ENCODE measurements at regions of chr15 and their contacts with region 1.

Region 1: DNA sequence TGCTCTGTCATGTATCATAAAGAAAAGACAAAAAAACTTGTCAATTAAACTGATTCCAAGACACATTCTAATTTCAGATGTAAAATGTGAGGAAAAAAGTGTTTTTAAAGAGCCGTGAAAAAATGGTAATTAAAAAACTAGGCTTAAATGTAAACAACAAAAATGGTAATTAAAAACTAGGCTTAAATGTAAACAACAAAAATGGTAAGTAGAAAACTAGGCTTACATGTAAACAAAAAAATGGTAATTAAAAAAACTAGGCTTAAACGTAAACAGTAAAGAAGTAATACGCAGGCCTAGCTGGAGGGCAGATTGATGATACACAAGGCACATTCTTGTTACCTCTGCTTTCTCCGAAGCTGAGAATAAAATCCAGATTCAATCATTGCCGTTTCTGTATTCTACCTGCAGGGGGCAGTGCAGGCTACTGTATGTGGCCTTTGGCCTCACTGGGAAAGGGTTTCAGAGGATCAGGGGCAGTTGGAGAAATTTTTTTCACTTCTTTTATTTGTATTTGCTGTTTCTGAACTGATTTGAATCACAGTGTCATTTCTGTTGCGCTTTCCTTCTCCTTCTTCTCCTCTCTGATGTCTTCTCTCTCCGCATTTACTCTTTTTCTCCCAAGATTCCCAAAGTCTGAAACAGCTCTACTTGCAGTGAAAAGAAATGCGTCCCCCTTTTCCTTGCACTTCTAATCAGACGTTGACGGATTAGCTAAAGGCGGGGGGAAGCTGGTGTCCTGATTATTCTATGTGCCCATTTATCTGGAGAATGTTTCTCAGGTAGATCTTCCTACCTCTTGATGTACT is 67.2 kb upstream of the MCTP2 start:
- DNase-seq: peak; percentile 75
- ATAC-seq: peak; percentile 49
- H3K4me3 Mint-ChIP-seq: no peak overlapping the region
- H3K27ac Mint-ChIP-seq: no peak overlapping the region
- H3K4me1 Mint-ChIP-seq: no peaks in the 10 kb centered on the region
- H3K27me3 Mint-ChIP-seq: no peaks in the 10 kb centered on the region

Region 2: DNA sequence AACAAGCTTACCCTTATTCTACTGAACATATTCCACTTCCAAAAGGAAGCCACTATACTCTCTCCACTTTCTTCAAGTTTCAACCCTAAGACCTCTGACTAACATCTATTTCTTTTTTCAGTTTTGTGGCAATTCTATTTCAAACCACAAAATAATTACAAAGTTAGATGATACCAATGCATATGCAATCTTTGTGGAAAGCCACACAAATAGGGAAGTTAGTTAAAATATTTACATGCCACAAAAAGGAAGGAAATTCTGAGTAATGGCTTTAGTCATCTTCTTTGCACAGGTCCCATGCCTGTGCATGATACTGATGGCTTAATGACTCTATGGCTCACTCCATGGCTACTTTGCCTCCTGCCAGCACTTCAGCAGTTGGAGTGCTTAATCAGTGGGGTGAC is 10.2 kb after region 1 on chr15:
- CTCF ChIA-PET with region 1: interaction called, 15 read pairs
- POLR2A ChIA-PET with region 1: no interaction called
- intact Hi-C with region 1: no loop called
- DNase-seq: peak; percentile 16
- ATAC-seq: peak; percentile 95
- H3K4me3 Mint-ChIP-seq: no peak overlapping the region
- H3K27ac Mint-ChIP-seq: no peak overlapping the region
- H3K4me1 Mint-ChIP-seq: peaks cover 25% of the 10 kb centered on the region
- H3K27me3 Mint-ChIP-seq: peaks cover 7% of the 10 kb centered on the region

Region 3: DNA sequence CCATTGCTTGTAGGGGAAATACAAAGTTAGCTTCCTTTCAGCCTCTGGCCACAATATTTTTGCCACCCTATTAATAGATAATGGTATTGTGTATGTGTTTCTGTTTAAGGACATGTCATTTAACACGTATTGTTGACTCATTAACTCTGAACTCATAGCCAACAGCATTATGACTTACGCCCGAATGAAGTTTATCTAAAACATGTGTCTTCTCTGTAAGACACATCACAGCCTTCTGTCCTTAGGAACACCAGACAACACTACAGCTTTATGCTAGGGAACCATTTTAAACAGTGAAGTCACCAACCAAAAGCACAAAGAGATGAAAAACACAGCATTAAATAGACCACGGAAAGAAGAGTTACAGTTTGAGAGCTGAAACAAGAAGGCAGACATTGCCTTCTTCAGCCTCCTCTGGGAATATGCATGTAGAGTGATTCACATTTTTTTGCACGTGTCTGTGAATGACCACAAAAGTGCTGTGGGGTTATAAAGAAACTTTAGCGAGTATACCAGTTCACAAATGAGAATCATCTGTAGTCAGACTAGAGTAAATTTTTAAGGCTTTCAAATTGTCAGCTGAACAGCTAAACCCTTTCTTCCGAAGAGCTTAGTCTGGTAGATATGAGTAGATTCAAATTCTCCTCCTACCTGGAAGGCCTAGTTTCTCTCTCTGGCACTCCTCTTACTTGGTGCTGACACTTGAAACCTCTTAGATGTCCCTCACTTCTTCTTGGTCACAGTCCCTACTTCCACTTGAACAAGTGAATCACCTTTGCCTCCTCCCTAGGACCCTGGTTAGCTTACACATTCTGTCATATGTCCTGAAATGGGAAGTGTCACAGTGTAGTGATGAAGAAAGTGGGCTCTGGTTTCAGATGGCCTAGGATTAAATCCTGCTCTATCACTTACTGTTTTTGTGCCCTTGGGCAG is 99.4 kb after region 1 on chr15:
- CTCF ChIA-PET with region 1: no interaction called
- POLR2A ChIA-PET with region 1: no interaction called
- intact Hi-C with region 1: no loop called
- DNase-seq: no peak
- ATAC-seq: peak; percentile 55
- H3K4me3 Mint-ChIP-seq: no peak overlapping the region
- H3K27ac Mint-ChIP-seq: peak overlapping the region; percentile 77
- H3K4me1 Mint-ChIP-seq: peaks cover 20% of the 10 kb centered on the region
- H3K27me3 Mint-ChIP-seq: no peaks in the 10 kb centered on the region

Region 4: DNA sequence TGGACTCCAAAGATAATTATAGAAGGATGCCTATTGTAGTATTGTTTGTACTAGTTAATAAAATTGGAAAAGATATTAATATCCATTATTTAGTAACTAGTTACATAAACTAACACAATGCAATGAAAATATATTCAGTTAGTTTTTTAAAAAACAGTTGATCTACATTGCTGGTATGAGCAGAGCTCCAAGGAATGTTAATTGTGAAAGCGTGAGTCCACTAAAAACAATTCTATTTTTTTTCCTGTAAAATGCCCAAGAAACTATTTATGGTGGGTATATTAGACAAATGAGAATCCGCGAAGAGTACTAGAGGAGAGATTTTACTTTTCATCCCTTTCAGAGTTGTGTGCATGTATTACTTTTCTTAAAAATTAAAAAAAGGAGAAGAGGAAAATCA is 171.4 kb after region 1 on chr15:
- CTCF ChIA-PET with region 1: interaction called, 24 read pairs
- POLR2A ChIA-PET with region 1: no interaction called
- intact Hi-C with region 1: no loop called
- DNase-seq: no peak
- ATAC-seq: no peak
- H3K4me3 Mint-ChIP-seq: no peak overlapping the region
- H3K27ac Mint-ChIP-seq: no peak overlapping the region
- H3K4me1 Mint-ChIP-seq: no peaks in the 10 kb centered on the region
- H3K27me3 Mint-ChIP-seq: no peaks in the 10 kb centered on the region

Region 5: GRCh38 chr15:94412979-94413746 is 249.0 kb after region 1 on chr15:
- CTCF ChIA-PET with region 1: no interaction called
- POLR2A ChIA-PET with region 1: no interaction called
- intact Hi-C with region 1: loop called in 1 of 2 experiments (anchors 10 kb)
- DNase-seq: no peak
- ATAC-seq: no peak
- H3K4me3 Mint-ChIP-seq: no peak overlapping the region
- H3K27ac Mint-ChIP-seq: no peak overlapping the region
- H3K4me1 Mint-ChIP-seq: no peaks in the 10 kb centered on the region
- H3K27me3 Mint-ChIP-seq: no peaks in the 10 kb centered on the region

Region 6: GRCh38 chr15:94582369-94582768 is 418.2 kb after region 1 on chr15:
- CTCF ChIA-PET with region 1: no interaction called
- POLR2A ChIA-PET with region 1: no interaction called
- intact Hi-C with region 1: loop called in 1 of 2 experiments (anchors 2 kb)
- DNase-seq: peak; percentile 62
- ATAC-seq: peak; percentile 57
- H3K4me3 Mint-ChIP-seq: no peak overlapping the region
- H3K27ac Mint-ChIP-seq: no peak overlapping the region
- H3K4me1 Mint-ChIP-seq: peaks cover 25% of the 10 kb centered on the region
- H3K27me3 Mint-ChIP-seq: peaks cover 68% of the 10 kb centered on the region